GM12878 (cell line): ENCODE measurements at regions of chr3 and their contacts with region 1.

Region 1: DNA sequence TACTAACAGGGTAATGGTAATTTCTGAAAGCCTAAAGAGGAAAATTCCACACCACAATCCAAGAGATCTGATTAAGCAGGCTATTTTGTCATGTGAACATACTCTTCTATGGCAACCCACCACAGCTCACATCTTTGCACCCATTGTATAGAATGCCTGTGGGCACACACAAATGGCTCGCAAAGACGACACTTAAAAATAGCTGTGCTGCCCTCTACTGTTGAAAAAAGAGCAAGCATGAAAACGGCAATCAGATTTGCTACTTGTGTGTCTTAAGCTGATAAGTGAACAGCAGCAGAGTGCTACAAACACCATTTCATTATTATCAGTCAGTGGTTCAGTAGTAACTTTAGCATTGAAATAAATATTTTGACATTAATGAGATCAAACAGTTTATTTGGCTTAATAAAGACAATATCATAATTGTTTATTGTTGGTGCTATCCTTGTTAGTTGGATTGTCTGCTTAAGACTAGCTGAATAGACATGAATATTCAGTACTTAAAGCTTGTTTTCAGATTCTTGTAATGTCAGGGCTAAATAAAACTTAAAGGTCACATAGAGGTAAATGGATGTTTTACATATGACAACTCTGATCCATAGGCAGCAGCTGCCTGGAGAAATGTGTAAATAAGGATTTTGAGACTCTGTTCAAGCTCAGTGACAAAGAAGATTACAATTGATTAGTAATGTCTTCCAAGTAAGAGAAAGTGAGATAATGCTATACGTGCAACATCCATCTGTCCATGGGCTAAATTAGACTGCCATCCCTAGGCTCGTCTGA is 199.1 kb downstream of the LRRN1 start:
- DNase-seq: peak; percentile 11
- ATAC-seq: peak; percentile 88
- H3K4me3 ChIP-seq: no peak overlapping the region
- H3K27ac ChIP-seq: no peak overlapping the region
- H3K4me1 ChIP-seq: no peaks in the 10 kb centered on the region
- H3K27me3 ChIP-seq: no peaks in the 10 kb centered on the region
- CTCF ChIP-seq: peak; percentile 73 to 77 (median 74)
- EP300 ChIP-seq: no peak
- POLR2A ChIP-seq: no peak
- RAD21 ChIP-seq: peak; percentile 81

Region 2: DNA sequence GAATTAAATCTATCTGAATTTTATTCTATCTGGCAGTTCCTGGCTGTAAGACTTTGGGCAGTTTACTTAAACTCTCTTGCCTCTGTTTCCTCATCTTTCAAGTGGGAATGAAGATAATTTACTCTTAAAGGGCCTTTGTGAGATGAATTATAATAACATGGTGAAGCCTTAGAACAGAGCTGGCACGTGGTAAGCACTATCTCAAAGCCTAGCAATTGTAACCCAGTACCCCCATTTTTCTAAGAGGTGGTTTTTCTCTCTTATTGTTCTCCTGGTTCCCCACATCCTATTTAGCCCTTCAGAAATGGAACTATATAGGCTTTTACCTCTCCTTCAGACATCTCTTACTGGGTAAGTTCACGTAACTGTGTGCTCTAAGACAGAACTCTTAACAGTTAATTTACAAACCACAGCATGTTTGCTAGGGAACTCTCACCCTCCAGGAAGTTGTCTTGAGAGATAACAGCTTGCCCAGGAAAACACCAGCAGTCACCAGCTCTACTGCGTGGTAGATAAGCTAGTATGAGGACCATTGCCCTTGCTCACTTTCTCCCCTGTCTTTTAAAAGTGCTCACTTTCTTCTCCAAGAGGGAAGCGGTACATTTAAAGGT is 806.6 kb before region 1 on chr3:
- CTCF ChIA-PET with region 1: interaction called, 22 read pairs
- POLR2A ChIA-PET with region 1: no interaction called
- RAD21 ChIA-PET with region 1: interaction called, 148 read pairs
- SMC1A ChIA-PET with region 1: interaction called, 129 read pairs
- in situ Hi-C with region 1: no loop called
- intact Hi-C with region 1: loop called (anchors 1 kb)
- DNase-seq: no peak
- ATAC-seq: no peak
- H3K4me3 ChIP-seq: no peak overlapping the region
- H3K27ac ChIP-seq: no peak overlapping the region
- H3K4me1 ChIP-seq: no peaks in the 10 kb centered on the region
- H3K27me3 ChIP-seq: no peaks in the 10 kb centered on the region; a peak in 1 of 4 replicates
- CTCF ChIP-seq: no peak
- EP300 ChIP-seq: no peak
- POLR2A ChIP-seq: no peak
- RAD21 ChIP-seq: no peak

Region 3: DNA sequence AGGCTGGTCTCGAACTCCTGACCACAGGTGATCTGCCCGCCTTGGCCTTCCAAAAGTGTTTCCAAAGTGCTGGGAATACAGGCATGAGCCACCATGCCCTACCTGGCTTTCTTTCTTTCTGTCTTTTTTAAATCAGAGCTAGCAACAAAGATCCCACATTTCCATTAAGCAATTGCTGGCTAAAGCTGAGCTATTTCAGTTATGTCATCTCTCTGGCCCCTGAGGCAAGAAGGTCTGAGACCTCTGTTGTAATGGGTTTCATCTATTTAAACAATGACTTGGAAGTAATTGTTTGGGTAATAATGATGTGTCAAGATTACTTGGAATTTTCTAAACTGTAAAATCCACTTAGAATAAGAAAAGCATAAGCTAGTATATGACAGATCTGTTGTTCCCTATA is 788.6 kb before region 1 on chr3:
- CTCF ChIA-PET with region 1: interaction called, 8 read pairs
- POLR2A ChIA-PET with region 1: no interaction called
- RAD21 ChIA-PET with region 1: interaction called, 6 read pairs
- SMC1A ChIA-PET with region 1: interaction called, 5 read pairs
- in situ Hi-C with region 1: loop called (anchors 5 kb)
- intact Hi-C with region 1: no loop called
- DNase-seq: no peak
- ATAC-seq: no peak
- H3K4me3 ChIP-seq: no peak overlapping the region
- H3K27ac ChIP-seq: no peak overlapping the region
- H3K4me1 ChIP-seq: no peaks in the 10 kb centered on the region
- H3K27me3 ChIP-seq: no peaks in the 10 kb centered on the region; a peak in 1 of 4 replicates
- CTCF ChIP-seq: no peak
- EP300 ChIP-seq: no peak
- POLR2A ChIP-seq: no peak
- RAD21 ChIP-seq: no peak

Region 4: DNA sequence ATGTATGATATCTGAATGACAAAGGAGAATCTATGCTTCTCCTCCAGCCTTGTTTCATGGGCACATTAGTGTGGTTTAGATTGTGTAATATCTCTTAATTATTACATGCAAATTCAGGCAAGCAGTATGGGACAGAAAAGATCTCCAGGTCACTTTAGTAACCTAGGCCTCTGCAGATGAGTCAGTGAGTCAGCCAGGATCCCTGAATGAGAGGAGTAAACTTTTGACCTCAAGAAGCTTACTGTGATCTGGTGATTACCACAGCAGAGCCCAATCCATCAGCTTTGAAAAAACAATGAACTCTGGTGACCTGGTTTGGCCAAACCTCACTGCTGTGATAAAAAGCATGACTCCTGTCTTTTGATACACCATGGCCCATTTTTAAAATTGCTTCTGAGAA is 91.3 kb before region 1 on chr3:
- CTCF ChIA-PET with region 1: no interaction called
- POLR2A ChIA-PET with region 1: no interaction called
- RAD21 ChIA-PET with region 1: no interaction called
- SMC1A ChIA-PET with region 1: no interaction called
- in situ Hi-C with region 1: no loop called
- intact Hi-C with region 1: no loop called
- DNase-seq: no peak
- ATAC-seq: no peak
- H3K4me3 ChIP-seq: no peak overlapping the region
- H3K27ac ChIP-seq: no peak overlapping the region
- H3K4me1 ChIP-seq: no peaks in the 10 kb centered on the region
- H3K27me3 ChIP-seq: no peaks in the 10 kb centered on the region
- CTCF ChIP-seq: no peak
- EP300 ChIP-seq: no peak
- POLR2A ChIP-seq: no peak
- RAD21 ChIP-seq: no peak

Region 5: GRCh38 chr3:3984053-3984452 is 14.3 kb before region 1 on chr3:
- CTCF ChIA-PET with region 1: interaction called, 13 read pairs
- POLR2A ChIA-PET with region 1: no interaction called
- RAD21 ChIA-PET with region 1: interaction called, 5 read pairs
- SMC1A ChIA-PET with region 1: interaction called, 4 read pairs
- in situ Hi-C with region 1: no loop called
- intact Hi-C with region 1: no loop called
- DNase-seq: no peak
- ATAC-seq: no peak
- H3K4me3 ChIP-seq: no peak overlapping the region
- H3K27ac ChIP-seq: no peak overlapping the region
- H3K4me1 ChIP-seq: no peaks in the 10 kb centered on the region
- H3K27me3 ChIP-seq: no peaks in the 10 kb centered on the region; a peak in 1 of 4 replicates
- CTCF ChIP-seq: no peak
- EP300 ChIP-seq: no peak
- POLR2A ChIP-seq: no peak
- RAD21 ChIP-seq: no peak

Region 6: DNA sequence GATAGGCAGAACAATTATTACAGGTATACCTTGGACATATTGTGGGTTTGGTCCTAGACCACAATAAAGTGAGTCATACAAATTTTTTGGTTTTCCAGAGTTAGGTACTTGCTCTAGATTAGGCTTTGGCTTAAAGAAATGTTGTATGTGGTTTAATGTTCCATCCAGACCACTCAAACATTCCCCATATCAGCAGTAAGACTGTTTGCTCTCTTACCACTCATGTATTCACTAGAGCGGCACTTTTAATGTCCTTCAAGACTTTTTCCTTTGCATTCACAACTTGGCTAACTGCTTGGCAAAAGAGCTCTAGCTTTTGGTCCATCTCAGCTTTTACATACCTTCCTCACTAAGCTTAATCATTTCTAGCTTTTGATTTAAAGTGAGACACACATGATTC is 54.4 kb after region 1 on chr3:
- CTCF ChIA-PET with region 1: no interaction called
- POLR2A ChIA-PET with region 1: no interaction called
- RAD21 ChIA-PET with region 1: no interaction called
- SMC1A ChIA-PET with region 1: no interaction called
- in situ Hi-C with region 1: no loop called
- intact Hi-C with region 1: no loop called
- DNase-seq: no peak
- ATAC-seq: no peak
- H3K4me3 ChIP-seq: no peak overlapping the region
- H3K27ac ChIP-seq: no peak overlapping the region
- H3K4me1 ChIP-seq: no peaks in the 10 kb centered on the region
- H3K27me3 ChIP-seq: no peaks in the 10 kb centered on the region
- CTCF ChIP-seq: no peak
- EP300 ChIP-seq: no peak
- POLR2A ChIP-seq: no peak
- RAD21 ChIP-seq: no peak

Region 7: DNA sequence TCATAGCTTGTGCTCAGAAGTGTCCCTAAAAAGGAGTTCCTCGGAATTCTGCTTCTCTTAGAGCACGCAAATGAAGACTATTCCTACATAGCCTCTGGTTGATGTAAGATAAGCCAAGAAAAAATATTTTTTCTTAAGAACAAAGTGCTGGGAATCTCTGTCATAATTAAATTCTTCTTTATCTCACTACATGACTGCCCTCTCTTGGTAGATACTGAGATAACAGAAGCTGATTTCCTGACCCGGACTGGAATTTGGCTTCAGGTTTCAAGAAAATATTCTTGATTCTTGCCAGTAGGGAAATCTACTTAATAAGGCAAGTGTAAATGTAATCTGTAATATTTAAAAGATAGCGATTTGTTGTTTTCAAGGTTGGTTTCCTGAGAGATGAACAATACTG is 273.5 kb after region 1 on chr3:
- CTCF ChIA-PET with region 1: interaction called, 9 read pairs
- POLR2A ChIA-PET with region 1: no interaction called
- RAD21 ChIA-PET with region 1: interaction called, 16 read pairs
- SMC1A ChIA-PET with region 1: interaction called, 3 read pairs
- in situ Hi-C with region 1: no loop called
- intact Hi-C with region 1: no loop called
- DNase-seq: no peak
- ATAC-seq: 0 out of 3 replicates have a peak, but pooled peaks have one; percentile 32
- H3K4me3 ChIP-seq: no peak overlapping the region
- H3K27ac ChIP-seq: no peak overlapping the region
- H3K4me1 ChIP-seq: no peaks in the 10 kb centered on the region; the same call in 1 of the 2 replicates
- H3K27me3 ChIP-seq: no peaks in the 10 kb centered on the region
- CTCF ChIP-seq: peak; percentile 27 to 43 (median 39); a peak in 5 of 6 replicates
- EP300 ChIP-seq: no peak
- POLR2A ChIP-seq: no peak
- RAD21 ChIP-seq: peak; percentile 57

Region 8: GRCh38 chr3:4290272-4290893 is 292.1 kb after region 1 on chr3:
- CTCF ChIA-PET with region 1: interaction called, 7 read pairs
- POLR2A ChIA-PET with region 1: no interaction called
- RAD21 ChIA-PET with region 1: interaction called, 12 read pairs
- SMC1A ChIA-PET with region 1: interaction called, 3 read pairs
- in situ Hi-C with region 1: no loop called
- intact Hi-C with region 1: loop called (anchors 2 kb)
- DNase-seq: no peak
- ATAC-seq: peak; percentile 75
- H3K4me3 ChIP-seq: no peak overlapping the region
- H3K27ac ChIP-seq: no peak overlapping the region
- H3K4me1 ChIP-seq: no peaks in the 10 kb centered on the region
- H3K27me3 ChIP-seq: peaks cover 0 to 2% of the 10 kb centered on the region in 2 experiments; a peak in 2 of 4 replicates
- CTCF ChIP-seq: peak; percentile 83 to 86 (median 85)
- EP300 ChIP-seq: no peak
- POLR2A ChIP-seq: no peak
- RAD21 ChIP-seq: peak; percentile 88